ENCODE measurements at regions of chr22 and their contacts with region 1.

Region 1: GRCh38 chr22:46006379-46007002 is 29.5 kb upstream of the WNT7B start:
- DNase-seq: peak; percentile 92
- CTCF ChIP-seq: peak; percentile 95

Region 2: GRCh38 chr22:45709060-45709739 is 297.3 kb before region 1 on chr22:
- CTCF ChIA-PET with region 1: no interaction called
- POLR2A ChIA-PET with region 1: no interaction called
- DNase-seq: no peak
- CTCF ChIP-seq: no peak

Region 3: DNA sequence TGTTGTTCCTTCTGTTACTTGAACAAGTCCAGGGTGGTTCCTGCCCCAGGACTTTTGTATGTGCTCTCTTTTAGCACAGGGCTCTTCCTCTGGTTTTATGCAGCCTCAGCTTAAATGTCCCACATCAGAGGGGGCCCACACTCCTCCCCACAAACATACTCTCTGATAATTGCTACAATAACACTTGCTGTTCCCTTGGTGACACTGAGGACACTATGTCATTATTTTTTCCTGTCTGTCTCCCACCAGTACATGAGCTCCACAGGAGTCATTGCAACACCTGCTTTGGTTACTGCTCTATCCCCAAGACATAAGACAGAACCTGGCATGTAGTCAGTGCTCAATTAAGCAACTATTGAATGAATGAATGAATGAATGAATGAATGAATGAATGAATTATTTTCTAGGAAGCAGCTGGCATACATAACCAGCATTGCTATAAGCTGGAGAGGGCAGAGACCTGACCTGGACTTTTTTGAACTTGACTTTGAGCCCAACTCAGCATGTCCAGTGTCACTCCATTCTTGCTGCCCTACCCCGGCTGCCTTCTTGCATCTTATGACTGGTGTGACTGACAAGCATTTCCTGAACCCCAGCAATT is 22.1 kb before region 1 on chr22:
- CTCF ChIA-PET with region 1: interaction called, 38 read pairs
- POLR2A ChIA-PET with region 1: no interaction called
- DNase-seq: no peak
- CTCF ChIP-seq: no peak

Region 4: DNA sequence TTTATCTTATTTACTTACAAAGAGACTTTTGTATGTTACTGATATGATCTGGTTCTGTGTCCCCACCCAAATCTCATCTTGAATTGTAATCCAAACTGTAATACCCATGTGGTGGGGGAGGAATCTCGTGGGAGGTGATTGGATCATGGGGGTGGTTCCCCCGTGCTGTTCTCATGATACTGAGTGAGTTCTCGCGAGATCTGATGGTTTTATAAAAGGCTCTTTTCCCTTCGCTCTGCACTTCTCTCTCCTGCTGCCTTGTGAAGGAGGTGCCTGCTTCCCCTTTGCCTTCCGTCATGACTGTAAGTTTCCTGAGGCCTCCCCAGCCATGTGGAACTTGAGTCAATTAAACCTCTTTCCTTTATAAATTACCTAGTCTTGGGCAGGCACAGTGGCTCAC is 12.9 kb after region 1 on chr22:
- CTCF ChIA-PET with region 1: interaction called, 87 read pairs
- POLR2A ChIA-PET with region 1: no interaction called
- DNase-seq: no peak
- CTCF ChIP-seq: no peak

Region 5: DNA sequence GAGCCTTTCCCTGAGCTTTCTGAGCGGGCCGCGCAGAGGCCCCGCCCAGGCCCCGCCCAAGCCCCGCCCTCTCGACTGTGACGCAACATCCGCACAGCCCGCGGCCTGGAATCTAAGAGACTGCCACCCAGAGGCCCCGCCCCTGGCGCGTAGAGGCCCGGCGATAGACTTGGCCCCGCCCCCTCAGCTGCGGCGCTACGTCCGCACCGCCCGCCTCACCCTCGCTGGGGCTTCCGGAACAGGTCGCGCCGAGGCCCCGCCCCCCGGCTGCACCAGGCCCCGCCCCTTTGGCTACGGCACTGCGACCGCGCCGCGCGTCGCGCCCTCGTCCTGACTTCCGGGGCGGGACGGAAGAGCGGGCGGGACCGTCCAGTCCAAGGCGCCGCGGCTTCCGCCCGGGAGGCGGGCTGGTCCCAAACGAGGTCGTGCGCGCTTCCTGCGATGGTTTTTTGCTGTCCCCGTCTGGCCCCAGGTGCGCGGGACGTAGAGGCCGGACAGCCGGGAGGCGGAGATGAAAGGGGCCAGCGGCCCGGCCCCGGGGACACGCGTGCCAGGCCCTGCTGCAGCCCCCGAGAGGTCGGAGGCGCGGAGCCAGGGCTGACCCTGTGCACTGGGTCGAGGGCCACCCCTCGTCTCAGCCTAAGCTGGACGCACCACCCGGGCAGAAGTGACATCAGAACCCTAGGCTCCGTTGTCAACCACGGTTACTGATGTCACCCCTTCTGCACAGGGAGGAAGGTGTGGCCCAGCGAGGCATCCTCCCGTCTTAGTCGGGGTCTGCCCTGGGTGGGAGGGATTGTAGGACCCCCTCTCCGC is 29.5 kb after region 1 on chr22:
- CTCF ChIA-PET with region 1: interaction called, 18 read pairs
- POLR2A ChIA-PET with region 1: no interaction called
- DNase-seq: peak; percentile 100
- CTCF ChIP-seq: no peak

Region 6: DNA sequence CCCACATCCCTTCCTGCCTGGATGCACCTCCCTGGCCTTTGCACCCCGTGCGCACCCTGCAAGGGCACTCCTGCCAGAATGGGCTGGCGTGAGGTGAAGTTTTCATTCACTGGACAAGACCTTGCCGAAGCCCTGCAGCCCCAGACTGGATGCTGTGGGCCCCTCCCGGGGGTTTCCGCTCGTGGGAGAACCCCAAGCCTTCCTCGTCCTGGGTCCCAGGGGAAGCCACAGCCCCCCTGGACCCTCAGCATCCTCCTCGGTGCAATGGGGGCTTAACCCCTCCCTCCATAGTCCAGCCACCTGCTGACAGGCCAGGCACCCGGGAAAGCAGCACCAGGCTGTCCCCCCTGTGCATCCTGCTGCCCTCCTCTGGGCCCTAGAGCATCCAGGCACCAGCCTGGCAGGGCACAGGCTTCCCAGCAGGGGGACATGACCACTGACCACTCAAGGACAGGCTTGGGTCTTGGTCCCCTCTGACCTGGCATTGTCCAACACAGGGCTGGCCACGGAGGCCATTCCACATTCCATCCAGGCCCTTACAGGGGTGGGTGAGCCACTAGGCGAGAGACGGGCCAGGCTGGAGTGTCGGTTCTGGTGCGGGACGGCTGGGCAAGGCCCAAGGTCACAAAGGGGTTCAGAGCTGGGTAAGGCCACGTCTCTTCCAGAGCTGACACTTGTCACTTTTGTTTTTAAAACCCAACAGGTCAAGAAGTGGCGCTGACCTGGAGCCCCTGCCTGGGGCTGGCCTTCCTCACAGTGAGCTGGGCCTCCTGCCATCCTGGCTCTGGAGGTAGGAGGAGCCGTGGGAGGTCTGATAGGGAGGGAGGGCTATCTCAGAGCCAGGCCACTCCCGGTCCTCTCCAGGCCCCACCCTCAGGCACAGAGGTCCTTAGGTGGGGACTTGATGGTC is 102.3 kb after region 1 on chr22:
- CTCF ChIA-PET with region 1: interaction called, 254 read pairs
- POLR2A ChIA-PET with region 1: no interaction called
- DNase-seq: no peak
- CTCF ChIP-seq: no peak

Region 7: DNA sequence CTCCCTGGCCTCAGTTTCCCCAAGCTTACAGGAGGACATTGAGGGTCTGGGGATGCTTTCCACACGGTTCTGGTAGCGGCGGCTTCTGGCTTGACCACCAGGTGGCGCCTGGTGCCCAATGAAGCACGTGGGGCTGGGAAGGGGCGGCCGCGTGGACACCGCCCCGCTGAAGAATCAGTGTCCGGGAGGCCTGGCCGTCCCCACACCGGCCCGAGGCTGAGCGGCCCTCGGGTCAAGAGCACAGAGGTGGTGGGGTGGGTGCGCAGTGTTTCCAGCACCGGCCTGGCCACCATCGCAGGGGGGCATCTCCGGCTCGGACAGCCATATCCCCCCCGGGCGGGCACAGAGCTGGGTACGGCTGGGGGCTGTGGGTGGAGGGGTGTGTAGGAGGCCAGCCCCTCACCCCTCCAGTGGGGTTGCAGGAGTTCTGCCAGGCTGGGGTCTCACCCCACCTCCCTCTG is 116.0 kb after region 1 on chr22:
- CTCF ChIA-PET with region 1: interaction called, 254 read pairs
- POLR2A ChIA-PET with region 1: no interaction called
- DNase-seq: peak; percentile 90
- CTCF ChIP-seq: peak; percentile 91

Measured in GM10248 (cell line).